Natural killer cell (primary cell): ENCODE measurements at regions of chr1 and their contacts with region 1.

Region 1: DNA sequence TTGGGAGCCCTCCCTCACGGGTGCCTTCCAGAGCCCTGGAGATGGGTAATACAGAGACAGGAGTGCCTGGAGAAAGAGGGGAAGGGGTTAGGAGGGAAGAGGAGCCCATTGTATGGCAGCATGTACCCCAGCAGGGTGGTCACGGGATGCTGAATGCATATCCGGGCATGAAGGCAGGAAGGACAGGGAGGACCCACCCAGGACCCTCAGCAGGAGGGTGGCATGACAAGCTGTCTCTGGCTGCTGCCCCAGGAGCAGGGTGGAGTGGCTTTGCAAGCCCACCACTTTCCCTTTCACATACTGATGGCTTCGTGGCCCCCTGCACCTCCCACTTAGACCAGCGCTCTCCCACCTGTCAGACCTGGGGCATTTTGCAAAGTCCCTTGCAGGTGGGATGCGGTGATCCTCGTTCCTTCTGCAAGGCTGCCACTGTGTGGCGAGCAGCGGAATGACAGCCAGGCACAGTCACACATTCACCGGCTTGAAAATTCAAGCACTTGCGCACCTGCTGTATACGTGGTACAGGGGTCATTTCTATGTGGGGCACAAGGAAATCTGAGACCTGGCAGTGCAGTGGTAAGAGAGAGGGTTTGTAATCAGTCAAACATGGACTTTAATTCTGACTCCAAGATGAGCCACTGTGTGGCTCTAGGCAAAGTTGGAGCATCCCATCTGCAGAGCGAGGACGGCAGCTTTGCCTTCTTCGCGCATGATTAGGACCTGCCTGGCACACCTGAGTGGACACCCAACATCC is 53.2 kb upstream of the TMEM51 start:
- DNase-seq: peak; percentile 60 to 67
- ATAC-seq: peak; percentile 62 to 94 (median 92)
- H3K4me3 ChIP-seq: no peak overlapping the region
- H3K4me3 Mint-ChIP-seq: no peak overlapping the region
- H3K27ac ChIP-seq: no peak overlapping the region
- H3K27ac Mint-ChIP-seq: peak overlapping the region in 1 of 2 donors; percentile 78
- H3K4me1 ChIP-seq: peaks cover 11% of the 10 kb centered on the region
- H3K4me1 Mint-ChIP-seq: peaks cover 30 to 34% of the 10 kb centered on the region in 2 donors
- H3K27me3 ChIP-seq: peaks cover 12% of the 10 kb centered on the region
- H3K27me3 Mint-ChIP-seq: peaks cover 16 to 34% of the 10 kb centered on the region in 2 donors
- CTCF ChIP-seq: peak; percentile 97

Region 2: GRCh38 chr1:14778898-14779865 is 321.1 kb before region 1 on chr1:
- intact Hi-C with region 1: loop called (anchors 5 kb)
- DNase-seq: peak in 1 of 2 donors; percentile 33
- ATAC-seq: peak in 1 of 3 donors; percentile 34
- H3K4me3 ChIP-seq: no peak overlapping the region
- H3K4me3 Mint-ChIP-seq: no peak overlapping the region
- H3K27ac ChIP-seq: no peak overlapping the region
- H3K27ac Mint-ChIP-seq: no peak overlapping the region
- H3K4me1 ChIP-seq: no peaks in the 10 kb centered on the region
- H3K4me1 Mint-ChIP-seq: peaks cover 0 to 9% of the 10 kb centered on the region in 2 donors
- H3K27me3 ChIP-seq: no peaks in the 10 kb centered on the region
- H3K27me3 Mint-ChIP-seq: peaks cover 3 to 8% of the 10 kb centered on the region in 2 donors
- CTCF ChIP-seq: peak; percentile 62

Region 3: DNA sequence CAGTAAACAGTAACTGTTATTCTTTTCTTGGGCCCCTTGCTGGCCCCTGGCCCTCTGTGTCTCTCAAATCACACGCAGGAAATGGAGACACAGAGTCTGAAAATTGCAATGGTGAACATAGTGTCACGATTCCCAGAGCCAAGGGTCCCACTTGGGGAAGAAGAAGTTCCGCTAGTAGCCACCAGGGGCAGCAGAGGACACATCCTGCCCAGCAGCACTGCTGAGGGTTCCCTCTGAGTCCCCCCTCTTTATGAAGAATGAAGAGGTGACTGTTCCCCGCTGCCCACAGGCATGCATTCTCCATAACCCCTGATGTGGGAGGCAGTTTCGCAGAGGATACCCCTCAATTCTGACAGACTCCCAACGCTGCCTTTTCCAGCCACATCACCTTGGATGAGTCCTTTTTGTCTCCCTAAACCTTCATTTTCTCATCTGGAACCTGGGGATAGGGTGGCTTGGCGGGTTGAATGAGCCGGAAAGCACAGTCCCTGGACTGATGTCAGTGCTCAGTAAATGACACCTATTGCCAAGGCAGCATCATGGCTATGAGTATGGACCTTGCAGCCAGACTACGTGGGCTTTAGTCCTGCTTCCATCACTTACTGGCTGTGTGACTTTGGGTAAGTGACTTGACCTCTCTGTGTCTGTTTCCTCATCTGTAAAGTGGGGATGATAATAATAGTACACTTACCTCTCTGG is 184.8 kb before region 1 on chr1:
- intact Hi-C with region 1: loop called (anchors 2 kb)
- DNase-seq: peak; percentile 52 to 60
- ATAC-seq: peak; percentile 67 to 83 (median 82)
- H3K4me3 ChIP-seq: no peak overlapping the region
- H3K4me3 Mint-ChIP-seq: no peak overlapping the region
- H3K27ac ChIP-seq: no peak overlapping the region
- H3K27ac Mint-ChIP-seq: no peak overlapping the region
- H3K4me1 ChIP-seq: no peaks in the 10 kb centered on the region
- H3K4me1 Mint-ChIP-seq: no peaks in the 10 kb centered on the region
- H3K27me3 ChIP-seq: no peaks in the 10 kb centered on the region
- H3K27me3 Mint-ChIP-seq: no peaks in the 10 kb centered on the region
- CTCF ChIP-seq: peak; percentile 92

Region 4: GRCh38 chr1:15008783-15009729 is 91.2 kb before region 1 on chr1:
- intact Hi-C with region 1: no loop called
- DNase-seq: no peak
- ATAC-seq: no peak
- H3K4me3 ChIP-seq: no peak overlapping the region
- H3K4me3 Mint-ChIP-seq: no peak overlapping the region
- H3K27ac ChIP-seq: no peak overlapping the region
- H3K27ac Mint-ChIP-seq: no peak overlapping the region
- H3K4me1 ChIP-seq: peaks cover 2% of the 10 kb centered on the region
- H3K4me1 Mint-ChIP-seq: peaks cover 0 to 5% of the 10 kb centered on the region in 2 donors
- H3K27me3 ChIP-seq: no peaks in the 10 kb centered on the region
- H3K27me3 Mint-ChIP-seq: peaks cover 0 to 8% of the 10 kb centered on the region in 2 donors
- CTCF ChIP-seq: no peak

Region 5: DNA sequence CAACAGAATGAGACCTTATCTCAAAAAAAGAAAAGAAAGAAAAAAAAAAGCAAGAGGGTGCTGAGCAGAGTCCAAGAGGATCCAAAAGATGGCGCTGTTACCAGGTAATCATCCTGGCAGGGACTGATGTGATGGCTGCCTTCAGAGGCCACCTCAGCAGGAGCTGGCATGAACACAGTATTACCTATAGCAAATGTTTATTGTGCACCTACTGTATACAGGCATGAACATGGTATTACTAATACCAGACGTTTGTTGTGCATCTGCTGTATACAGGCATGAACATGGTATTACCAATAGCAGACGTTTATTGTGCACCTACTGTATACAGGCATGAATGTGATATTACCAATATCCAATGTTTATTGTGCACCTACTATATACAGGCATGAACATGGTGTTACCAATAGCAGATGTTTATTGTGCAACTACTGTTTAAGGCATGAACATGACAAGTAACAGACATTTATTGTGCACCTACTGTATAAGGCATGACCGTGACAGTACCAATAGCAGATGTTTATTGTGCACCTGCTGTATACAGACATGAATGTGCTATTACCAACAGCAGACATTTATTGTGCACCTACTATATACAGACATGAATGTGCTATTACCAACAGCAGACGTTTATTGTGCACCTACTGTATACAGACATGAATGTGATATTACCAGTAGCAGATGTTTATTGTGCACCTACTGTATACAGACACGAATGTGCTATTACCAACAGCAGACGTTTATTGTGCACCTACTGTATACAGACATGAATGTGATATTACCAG is 61.9 kb before region 1 on chr1:
- intact Hi-C with region 1: loop called (anchors 1 kb)
- DNase-seq: peak in 1 of 2 donors; percentile 33
- ATAC-seq: peak; percentile 36 to 70 (median 65)
- H3K4me3 ChIP-seq: no peak overlapping the region
- H3K4me3 Mint-ChIP-seq: no peak overlapping the region
- H3K27ac ChIP-seq: no peak overlapping the region
- H3K27ac Mint-ChIP-seq: no peak overlapping the region
- H3K4me1 ChIP-seq: no peaks in the 10 kb centered on the region
- H3K4me1 Mint-ChIP-seq: peaks cover 0 to 5% of the 10 kb centered on the region in 2 donors
- H3K27me3 ChIP-seq: no peaks in the 10 kb centered on the region
- H3K27me3 Mint-ChIP-seq: no peaks in the 10 kb centered on the region
- CTCF ChIP-seq: no peak

Region 6: DNA sequence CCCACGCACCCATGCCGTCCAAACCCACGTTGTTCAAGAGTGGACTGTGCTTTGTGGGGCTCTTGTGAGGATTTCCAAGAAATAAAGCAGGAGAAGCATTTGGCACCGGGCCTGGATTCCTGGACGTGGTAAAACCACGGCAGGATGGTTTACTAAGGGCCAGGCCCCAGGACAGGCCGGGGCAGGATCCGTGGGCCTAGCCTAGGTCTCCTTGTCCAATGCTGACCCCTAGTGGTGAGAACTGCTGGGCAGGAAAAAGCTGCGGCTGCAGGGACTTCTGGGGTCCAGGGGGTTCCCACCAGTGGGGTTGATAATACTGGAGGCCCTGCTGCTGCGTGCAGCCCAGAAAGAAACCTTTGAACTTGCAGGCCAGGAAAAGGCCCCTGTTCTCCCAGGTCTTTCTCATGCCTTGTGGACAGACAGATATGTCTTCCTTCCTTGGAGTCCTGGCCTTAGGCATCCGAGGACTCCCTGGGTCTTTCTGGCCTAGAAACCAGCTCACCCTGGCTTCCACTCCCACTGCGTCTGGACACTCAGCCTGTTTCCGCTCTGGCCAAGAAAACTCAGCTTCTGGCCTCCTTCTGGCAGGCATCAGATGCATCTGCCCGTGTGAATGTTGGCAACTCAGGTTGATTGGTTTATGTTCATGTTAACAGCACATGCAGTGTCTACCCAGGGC is 53.7 kb before region 1 on chr1:
- intact Hi-C with region 1: loop called (anchors 2 kb)
- DNase-seq: peak; percentile 60 to 67
- ATAC-seq: peak; percentile 66 to 88 (median 80)
- H3K4me3 ChIP-seq: no peak overlapping the region
- H3K4me3 Mint-ChIP-seq: no peak overlapping the region
- H3K27ac ChIP-seq: no peak overlapping the region
- H3K27ac Mint-ChIP-seq: no peak overlapping the region
- H3K4me1 ChIP-seq: no peaks in the 10 kb centered on the region
- H3K4me1 Mint-ChIP-seq: peaks cover 0 to 6% of the 10 kb centered on the region in 2 donors
- H3K27me3 ChIP-seq: no peaks in the 10 kb centered on the region
- H3K27me3 Mint-ChIP-seq: no peaks in the 10 kb centered on the region
- CTCF ChIP-seq: peak; percentile 90

Region 7: DNA sequence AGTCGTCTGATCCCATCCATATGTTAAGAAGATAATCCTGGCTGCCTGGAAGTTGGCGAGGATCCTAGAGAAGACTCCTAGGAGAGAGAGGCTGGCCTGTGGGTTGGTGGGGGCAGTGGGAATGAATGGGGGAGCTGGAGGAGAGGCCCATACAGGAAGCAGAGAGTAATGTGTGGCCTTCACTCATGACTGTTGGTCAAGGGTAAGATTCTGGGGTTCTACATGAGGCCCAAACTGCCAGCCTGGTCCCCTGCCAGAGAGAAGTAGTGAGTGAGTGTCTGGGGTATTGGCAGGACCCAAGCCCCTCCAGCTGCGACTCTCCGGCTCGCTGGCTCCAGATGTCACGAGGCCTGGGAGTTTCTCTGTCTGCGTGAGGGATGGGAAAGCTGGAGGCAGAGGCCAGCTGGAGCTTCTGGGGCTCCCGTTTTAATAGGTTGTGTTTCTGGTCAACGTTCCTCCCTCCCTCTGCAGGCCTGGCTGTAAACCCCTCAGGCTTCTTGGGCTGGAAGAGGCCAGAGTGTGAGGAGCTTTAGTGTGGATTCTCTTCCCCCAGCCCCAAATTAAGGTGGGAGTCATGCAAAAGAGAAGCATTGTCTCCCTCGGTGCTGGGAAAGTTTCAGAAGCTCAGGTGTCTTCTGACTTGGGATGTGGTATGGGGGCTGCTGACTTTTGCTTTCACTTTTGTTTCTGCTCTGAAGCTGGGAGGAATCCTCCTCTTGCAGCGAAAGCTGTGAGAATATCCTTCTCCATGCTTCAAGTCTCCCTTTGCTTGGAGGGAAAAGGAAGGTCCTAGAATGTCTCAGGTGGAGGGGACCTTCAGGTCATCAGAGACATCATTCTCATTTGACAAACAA is 55.8 kb after region 1 on chr1:
- intact Hi-C with region 1: no loop called
- DNase-seq: peak in 1 of 2 donors; percentile 33
- ATAC-seq: peak in 2 of 3 donors; percentile 40 to 46
- H3K4me3 ChIP-seq: no peak overlapping the region
- H3K4me3 Mint-ChIP-seq: peak overlapping the region; percentile 65
- H3K27ac ChIP-seq: no peak overlapping the region
- H3K27ac Mint-ChIP-seq: peak overlapping the region in 1 of 2 donors; percentile 3
- H3K4me1 ChIP-seq: peaks cover 40% of the 10 kb centered on the region
- H3K4me1 Mint-ChIP-seq: peaks cover 19 to 20% of the 10 kb centered on the region in 2 donors
- H3K27me3 ChIP-seq: peaks cover 28% of the 10 kb centered on the region
- H3K27me3 Mint-ChIP-seq: peaks cover 21 to 26% of the 10 kb centered on the region in 2 donors
- CTCF ChIP-seq: no peak